CD8-positive, alpha-beta T cell (primary cell): ENCODE measurements at regions of chr2 and their contacts with region 1.

Region 1: DNA sequence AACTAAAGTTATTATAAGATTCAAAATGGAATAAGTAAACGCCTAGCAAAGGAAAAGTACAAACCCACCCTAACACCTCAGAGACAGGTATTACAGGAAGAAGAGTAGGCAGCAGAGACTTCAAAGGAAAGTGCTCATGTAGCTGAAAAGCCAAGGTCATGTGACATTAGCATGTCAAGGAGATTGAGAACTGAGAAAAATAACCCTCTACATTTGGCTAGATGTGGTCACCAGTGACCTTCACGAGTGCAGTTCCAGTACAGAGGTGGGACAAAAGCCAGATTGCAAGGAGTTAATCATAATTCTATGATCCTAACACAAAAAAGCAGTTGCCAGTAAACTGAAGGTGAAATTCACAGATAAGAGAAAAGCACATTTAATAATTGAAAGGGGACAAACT is 252.7 kb downstream of the ZEB2 start:
- DNase-seq: peak in 2 of 9 experiments; percentile 42 to 61
- ATAC-seq: peak; percentile 76
- H3K4me3 ChIP-seq: no peak overlapping the region
- H3K4me3 Mint-ChIP-seq: peak overlapping the region; percentile 29
- H3K27ac ChIP-seq: peak overlapping the region in 1 of 2 experiments; percentile 48
- H3K27ac Mint-ChIP-seq: peak overlapping the region; percentile 34
- H3K4me1 ChIP-seq: peaks cover 16% of the 10 kb centered on the region
- H3K4me1 Mint-ChIP-seq: peaks cover 34% of the 10 kb centered on the region
- H3K27me3 ChIP-seq: no peaks in the 10 kb centered on the region
- H3K27me3 Mint-ChIP-seq: no peaks in the 10 kb centered on the region
- CTCF ChIP-seq: no peak

Region 2: DNA sequence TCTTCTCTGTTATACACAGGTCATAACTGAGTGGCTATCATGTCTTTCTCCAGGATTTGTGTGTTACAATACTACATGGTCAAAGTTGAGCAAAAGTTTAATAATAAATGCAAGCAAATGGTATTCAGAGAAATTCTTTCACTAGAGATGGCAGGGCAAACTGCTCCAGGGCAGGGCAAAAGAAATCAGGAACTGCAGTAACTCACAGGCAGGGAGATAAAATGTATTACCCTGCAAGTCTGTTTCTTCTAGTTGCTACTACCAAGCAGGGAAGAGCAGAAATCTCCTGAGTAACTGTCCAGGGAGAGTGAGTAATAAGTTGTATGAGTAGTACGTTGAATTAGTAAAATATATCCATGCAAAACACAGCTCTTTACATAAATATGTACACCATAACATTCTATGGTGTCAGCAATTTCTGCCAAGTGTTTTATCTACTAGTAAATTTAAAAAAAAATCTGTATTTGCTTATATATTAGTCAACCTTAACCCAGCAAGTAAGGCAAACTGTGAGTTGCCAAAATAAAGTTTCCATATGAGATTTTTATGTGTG is 151.4 kb before region 1 on chr2:
- CTCF ChIA-PET with region 1: no interaction called
- POLR2A ChIA-PET with region 1: no interaction called
- intact Hi-C with region 1: no loop called
- DNase-seq: no peak
- ATAC-seq: no peak
- H3K4me3 ChIP-seq: no peak overlapping the region
- H3K4me3 Mint-ChIP-seq: no peak overlapping the region
- H3K27ac ChIP-seq: no peak overlapping the region
- H3K27ac Mint-ChIP-seq: no peak overlapping the region
- H3K4me1 ChIP-seq: no peaks in the 10 kb centered on the region
- H3K4me1 Mint-ChIP-seq: no peaks in the 10 kb centered on the region
- H3K27me3 ChIP-seq: no peaks in the 10 kb centered on the region
- H3K27me3 Mint-ChIP-seq: no peaks in the 10 kb centered on the region
- CTCF ChIP-seq: no peak

Region 3: GRCh38 chr2:144304202-144304601 is 37.0 kb after region 1 on chr2:
- CTCF ChIA-PET with region 1: no interaction called
- POLR2A ChIA-PET with region 1: no interaction called
- intact Hi-C with region 1: loop called in 1 of 2 experiments (anchors 5 kb)
- DNase-seq: no peak
- ATAC-seq: no peak
- H3K4me3 ChIP-seq: no peak overlapping the region
- H3K4me3 Mint-ChIP-seq: no peak overlapping the region
- H3K27ac ChIP-seq: no peak overlapping the region
- H3K27ac Mint-ChIP-seq: no peak overlapping the region
- H3K4me1 ChIP-seq: no peaks in the 10 kb centered on the region
- H3K4me1 Mint-ChIP-seq: peaks cover 16% of the 10 kb centered on the region
- H3K27me3 ChIP-seq: no peaks in the 10 kb centered on the region
- H3K27me3 Mint-ChIP-seq: no peaks in the 10 kb centered on the region
- CTCF ChIP-seq: no peak

Region 4: GRCh38 chr2:144320491-144320890 is 53.3 kb after region 1 on chr2:
- CTCF ChIA-PET with region 1: no interaction called
- POLR2A ChIA-PET with region 1: no interaction called
- intact Hi-C with region 1: loop called (anchors 5 kb)
- DNase-seq: peak in 8 of 9 experiments; percentile 41 to 87 (median 72)
- ATAC-seq: peak; percentile 53
- H3K4me3 ChIP-seq: no peak overlapping the region
- H3K4me3 Mint-ChIP-seq: peak overlapping the region; percentile 27
- H3K27ac ChIP-seq: peak overlapping the region in 1 of 2 experiments; percentile 64
- H3K27ac Mint-ChIP-seq: peak overlapping the region; percentile 86
- H3K4me1 ChIP-seq: peaks cover 29% of the 10 kb centered on the region
- H3K4me1 Mint-ChIP-seq: peaks cover 55% of the 10 kb centered on the region
- H3K27me3 ChIP-seq: no peaks in the 10 kb centered on the region
- H3K27me3 Mint-ChIP-seq: no peaks in the 10 kb centered on the region
- CTCF ChIP-seq: no peak

Region 5: DNA sequence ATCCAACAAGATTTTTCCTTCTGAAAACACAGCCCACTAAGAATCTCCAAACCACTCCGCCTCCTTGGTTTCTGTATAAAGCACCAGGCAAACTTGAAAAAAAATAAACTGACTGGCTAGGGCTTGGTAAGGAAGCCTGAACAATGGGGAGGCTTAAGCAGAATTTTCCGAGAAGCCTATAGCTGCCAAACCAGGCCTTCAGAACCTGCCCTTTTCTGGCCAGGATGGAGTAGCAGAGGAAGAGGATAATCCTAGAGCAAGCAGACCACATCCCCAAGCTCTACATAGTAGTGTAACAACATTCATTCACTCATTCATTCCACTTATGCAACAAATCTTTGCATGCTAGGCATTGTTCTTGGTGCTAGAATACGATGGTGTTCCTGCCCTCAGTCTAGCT is 782.2 kb after region 1 on chr2:
- CTCF ChIA-PET with region 1: no interaction called
- POLR2A ChIA-PET with region 1: no interaction called
- intact Hi-C with region 1: no loop called
- DNase-seq: no peak
- ATAC-seq: no peak
- H3K4me3 ChIP-seq: no peak overlapping the region
- H3K4me3 Mint-ChIP-seq: no peak overlapping the region
- H3K27ac ChIP-seq: no peak overlapping the region
- H3K27ac Mint-ChIP-seq: no peak overlapping the region
- H3K4me1 ChIP-seq: no peaks in the 10 kb centered on the region
- H3K4me1 Mint-ChIP-seq: no peaks in the 10 kb centered on the region
- H3K27me3 ChIP-seq: no peaks in the 10 kb centered on the region
- H3K27me3 Mint-ChIP-seq: no peaks in the 10 kb centered on the region
- CTCF ChIP-seq: no peak